Activated CD4-positive, alpha-beta T cell treated with anti-CD3 and anti-CD28 coated beads for 36 hours (primary cell): ENCODE measurements at regions of chr20 and their contacts with region 1.

Region 1: GRCh38 chr20:62237801-62238571 is at the start of gene OSBPL2:
- DNase-seq: peak; percentile 100
- ATAC-seq: peak; percentile 99
- H3K4me3 Mint-ChIP-seq: peak within 1 kb of the TSS; percentile 77
- H3K27ac Mint-ChIP-seq: peak within 1 kb of the TSS; percentile 74
- H3K4me1 Mint-ChIP-seq: peaks cover 34% of the 10 kb centered on the region
- H3K27me3 Mint-ChIP-seq: no peaks in the 10 kb centered on the region
- total RNA-seq, gene OSBPL2: 19.2 to 23.0 TPM

Region 2: GRCh38 chr20:62073323-62073722 is 164.7 kb before region 1 on chr20:
- CTCF ChIA-PET with region 1: no interaction called
- POLR2A ChIA-PET with region 1: no interaction called
- intact Hi-C with region 1: no loop called
- DNase-seq: no peak
- ATAC-seq: no peak
- H3K4me3 Mint-ChIP-seq: no peak overlapping the region
- H3K27ac Mint-ChIP-seq: no peak overlapping the region
- H3K4me1 Mint-ChIP-seq: peaks cover 3% of the 10 kb centered on the region
- H3K27me3 Mint-ChIP-seq: no peaks in the 10 kb centered on the region

Region 3: GRCh38 chr20:62182613-62183425 is 55.2 kb before region 1 on chr20 and contains the start of gene MTG2:
- CTCF ChIA-PET with region 1: no interaction called
- POLR2A ChIA-PET with region 1: no interaction called
- intact Hi-C with region 1: loop called (anchors 1 kb)
- DNase-seq: peak; percentile 97
- ATAC-seq: peak; percentile 99
- H3K4me3 Mint-ChIP-seq: peak within 1 kb of the TSS; percentile 88
- H3K27ac Mint-ChIP-seq: peak within 1 kb of the TSS; percentile 87
- H3K4me1 Mint-ChIP-seq: peaks cover 39% of the 10 kb centered on the region
- H3K27me3 Mint-ChIP-seq: no peaks in the 10 kb centered on the region
- total RNA-seq, gene MTG2: 38.0 to 44.9 TPM

Region 4: DNA sequence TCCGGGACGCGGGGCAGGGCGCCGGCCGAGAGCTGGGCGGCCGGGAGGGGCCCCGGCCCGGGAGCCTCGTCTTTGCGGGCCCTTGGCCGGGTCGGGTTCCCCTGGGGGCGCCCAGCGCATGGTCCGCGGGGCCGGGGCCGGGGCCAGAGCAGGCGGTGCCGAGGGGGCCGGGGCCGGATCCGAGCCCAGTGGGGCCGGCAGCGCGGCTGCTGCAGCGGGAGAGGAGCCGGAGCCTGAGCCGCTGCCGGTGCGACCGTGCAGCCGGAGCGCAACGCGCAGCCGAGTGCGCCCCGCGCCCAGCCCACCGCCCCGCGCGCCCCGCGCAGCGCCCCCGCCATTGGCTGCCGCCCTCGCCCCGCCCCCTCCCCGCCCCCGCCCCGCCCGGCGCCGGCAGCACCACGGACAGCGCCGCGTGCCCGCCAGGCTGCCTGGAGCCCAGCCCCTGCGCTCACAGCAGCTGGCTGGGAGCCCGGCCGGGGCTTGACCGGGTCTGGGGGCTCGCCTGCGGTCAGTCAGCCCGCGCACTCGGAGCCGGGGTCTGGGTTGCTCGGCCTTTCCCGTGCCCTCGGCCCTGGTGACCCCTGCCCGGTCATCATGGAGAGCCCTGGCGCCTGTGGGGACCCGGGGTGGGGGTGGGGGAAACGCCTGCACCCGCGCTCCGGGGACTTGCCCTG is 17.9 kb before region 1 on chr20 and contains the start of gene HRH3:
- CTCF ChIA-PET with region 1: interaction called, 3 read pairs
- POLR2A ChIA-PET with region 1: no interaction called
- intact Hi-C with region 1: loop called in 1 of 2 experiments (anchors 1 kb)
- DNase-seq: peak; percentile 60
- ATAC-seq: peak; percentile 66
- H3K4me3 Mint-ChIP-seq: no peak within 1 kb of the TSS
- H3K27ac Mint-ChIP-seq: no peak within 1 kb of the TSS
- H3K4me1 Mint-ChIP-seq: no peaks in the 10 kb centered on the region
- H3K27me3 Mint-ChIP-seq: peaks cover 35% of the 10 kb centered on the region
- total RNA-seq, gene HRH3: not detected

Region 5: GRCh38 chr20:62258499-62259293 is 20.7 kb after region 1 on chr20:
- CTCF ChIA-PET with region 1: no interaction called
- POLR2A ChIA-PET with region 1: no interaction called
- intact Hi-C with region 1: no loop called
- DNase-seq: no peak
- ATAC-seq: no peak
- H3K4me3 Mint-ChIP-seq: no peak overlapping the region
- H3K27ac Mint-ChIP-seq: no peak overlapping the region
- H3K4me1 Mint-ChIP-seq: peaks cover 3% of the 10 kb centered on the region
- H3K27me3 Mint-ChIP-seq: no peaks in the 10 kb centered on the region

Region 6: DNA sequence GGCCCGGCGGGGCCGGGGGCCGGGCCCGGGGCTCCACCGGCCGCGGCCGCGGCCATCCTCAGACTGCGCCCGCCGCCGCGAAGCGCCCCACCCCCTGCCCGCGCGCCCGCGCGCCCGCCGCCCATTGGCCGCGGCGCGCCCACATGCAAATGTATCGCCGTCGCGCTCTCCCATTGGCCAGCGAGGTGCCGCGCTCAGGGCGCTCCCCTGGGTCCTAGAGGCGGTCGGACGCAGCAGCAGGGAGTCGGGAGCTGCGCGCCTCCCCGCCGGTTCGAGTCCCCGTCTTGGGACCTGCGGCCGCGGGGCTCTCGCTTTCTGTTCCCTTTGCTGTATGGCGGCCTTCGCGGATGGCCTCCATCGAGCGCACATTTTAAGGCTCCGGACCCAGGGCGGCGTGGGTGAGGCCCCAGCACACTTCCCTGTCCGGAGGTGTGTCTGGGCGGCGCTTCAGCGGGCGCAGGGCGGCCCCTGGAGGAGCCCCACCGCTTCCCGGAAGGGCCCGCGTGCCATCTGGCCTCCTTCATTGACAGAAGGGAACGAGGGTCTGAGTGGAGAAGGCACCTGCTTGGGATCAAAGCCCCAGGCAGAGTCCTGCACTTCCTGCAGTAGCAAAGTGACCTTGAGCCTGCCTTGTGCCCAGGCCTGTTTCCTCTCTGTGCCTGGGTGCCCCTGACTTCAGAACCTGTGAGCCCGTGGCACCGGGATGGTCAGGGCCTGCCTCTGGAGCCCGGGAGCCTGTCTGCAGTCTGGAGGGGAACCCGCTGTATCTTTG is 169.4 kb after region 1 on chr20 and contains the start of gene CABLES2:
- CTCF ChIA-PET with region 1: no interaction called
- POLR2A ChIA-PET with region 1: no interaction called
- intact Hi-C with region 1: loop called in 1 of 2 experiments (anchors 1 kb)
- DNase-seq: peak; percentile 96
- ATAC-seq: peak; percentile 93
- H3K4me3 Mint-ChIP-seq: peak within 1 kb of the TSS; percentile 72
- H3K27ac Mint-ChIP-seq: peak within 1 kb of the TSS; percentile 82
- H3K4me1 Mint-ChIP-seq: peaks cover 23% of the 10 kb centered on the region
- H3K27me3 Mint-ChIP-seq: peaks cover 2% of the 10 kb centered on the region
- total RNA-seq, gene CABLES2: 6.4 to 7.6 TPM

Region 7: GRCh38 chr20:62623488-62624324 is 385.7 kb after region 1 on chr20:
- CTCF ChIA-PET with region 1: no interaction called
- POLR2A ChIA-PET with region 1: no interaction called
- intact Hi-C with region 1: loop called in 1 of 2 experiments (anchors 1 kb)
- DNase-seq: peak; percentile 97
- ATAC-seq: peak; percentile 91
- H3K4me3 Mint-ChIP-seq: peak overlapping the region; percentile 69
- H3K27ac Mint-ChIP-seq: peak overlapping the region; percentile 96
- H3K4me1 Mint-ChIP-seq: peaks cover 26% of the 10 kb centered on the region
- H3K27me3 Mint-ChIP-seq: no peaks in the 10 kb centered on the region